ENCODE measurements at regions of chr11 and their contacts with region 1.

Region 1: GRCh38 chr11:116853461-116854073 is 16.1 kb upstream of the APOA1 start:
- DNase-seq: peak; percentile 13 to 90 (median 61)
- ATAC-seq: peak; percentile 95
- H3K4me3 ChIP-seq: peak overlapping the region; percentile 4 to 7
- H3K4me3 Mint-ChIP-seq: peak overlapping the region; percentile 47
- H3K27ac ChIP-seq: peak overlapping the region; percentile 47 to 72
- H3K27ac Mint-ChIP-seq: peak overlapping the region; percentile 69
- H3K4me1 ChIP-seq: peaks cover 56% of the 10 kb centered on the region
- H3K4me1 Mint-ChIP-seq: peaks cover 73% of the 10 kb centered on the region
- H3K27me3 ChIP-seq: no peaks in the 10 kb centered on the region
- H3K27me3 Mint-ChIP-seq: no peaks in the 10 kb centered on the region
- CTCF ChIP-seq: no peak

Region 2: GRCh38 chr11:116415095-116415494 is 438.5 kb before region 1 on chr11:
- CTCF ChIA-PET with region 1: no interaction called
- POLR2A ChIA-PET with region 1: no interaction called
- intact Hi-C with region 1: no loop called
- DNase-seq: no peak
- ATAC-seq: no peak
- H3K4me3 ChIP-seq: no peak overlapping the region
- H3K4me3 Mint-ChIP-seq: no peak overlapping the region
- H3K27ac ChIP-seq: no peak overlapping the region
- H3K27ac Mint-ChIP-seq: no peak overlapping the region
- H3K4me1 ChIP-seq: no peaks in the 10 kb centered on the region
- H3K4me1 Mint-ChIP-seq: no peaks in the 10 kb centered on the region
- H3K27me3 ChIP-seq: no peaks in the 10 kb centered on the region
- H3K27me3 Mint-ChIP-seq: peaks cover 9% of the 10 kb centered on the region
- CTCF ChIP-seq: no peak

Region 3: GRCh38 chr11:116787786-116788486 is 65.6 kb before region 1 on chr11 and contains the start of gene ZPR1:
- CTCF ChIA-PET with region 1: interaction called, 33 read pairs
- POLR2A ChIA-PET with region 1: interaction called, 7 read pairs
- intact Hi-C with region 1: loop called (anchors 1 to 5 kb)
- DNase-seq: peak; percentile 69 to 91 (median 87)
- ATAC-seq: peak; percentile 80
- H3K4me3 ChIP-seq: peak within 1 kb of the TSS; percentile 60 to 94
- H3K4me3 Mint-ChIP-seq: peak within 1 kb of the TSS; percentile 95
- H3K27ac ChIP-seq: peak within 1 kb of the TSS; percentile 80 to 95
- H3K27ac Mint-ChIP-seq: peak within 1 kb of the TSS; percentile 91
- H3K4me1 ChIP-seq: peaks cover 29% of the 10 kb centered on the region
- H3K4me1 Mint-ChIP-seq: peaks cover 54% of the 10 kb centered on the region
- H3K27me3 ChIP-seq: no peaks in the 10 kb centered on the region
- H3K27me3 Mint-ChIP-seq: no peaks in the 10 kb centered on the region
- CTCF ChIP-seq: no peak
- total RNA-seq, gene ZPR1: 132 to 134 TPM

Region 4: DNA sequence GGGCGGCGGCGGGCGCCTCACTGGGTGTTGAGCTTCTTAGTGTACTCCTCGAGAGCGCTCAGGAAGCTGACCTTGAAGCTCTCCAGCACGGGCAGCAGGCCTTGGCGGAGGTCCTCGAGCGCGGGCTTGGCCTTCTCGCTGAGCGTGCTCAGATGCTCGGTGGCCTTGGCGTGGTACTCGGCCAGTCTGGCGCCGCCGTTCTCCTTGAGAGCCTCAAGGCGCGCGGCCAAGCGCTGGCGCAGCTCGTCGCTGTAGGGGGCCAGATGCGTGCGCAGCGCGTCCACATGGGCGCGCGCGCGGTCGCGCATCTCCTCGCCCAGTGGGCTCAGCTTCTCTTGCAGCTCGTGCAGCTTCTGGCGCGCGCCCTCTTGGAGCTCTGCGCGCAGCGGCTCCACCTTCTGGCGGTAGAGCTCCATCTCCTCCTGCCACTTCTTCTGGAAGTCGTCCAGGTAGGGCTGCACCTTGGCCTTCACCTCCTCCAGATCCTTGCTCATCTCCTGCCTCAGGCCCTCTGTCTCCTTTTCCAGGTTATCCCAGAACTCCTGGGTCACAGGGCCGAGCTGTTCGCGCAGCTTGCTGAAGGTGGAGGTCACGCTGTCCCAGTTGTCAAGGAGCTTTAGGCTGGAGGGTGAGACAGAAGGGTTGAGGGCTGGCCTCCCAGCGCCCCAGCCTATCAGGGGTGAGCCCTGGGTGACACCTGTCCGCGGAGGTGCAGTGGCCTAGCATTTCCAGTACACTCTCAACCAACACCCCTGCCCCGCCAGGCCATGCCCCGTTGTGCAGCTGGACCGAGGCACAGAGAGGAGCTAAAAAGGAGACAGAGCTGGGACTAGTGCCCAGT is 17.6 kb before region 1 on chr11:
- CTCF ChIA-PET with region 1: interaction called, 52 read pairs
- POLR2A ChIA-PET with region 1: interaction called, 18 read pairs
- intact Hi-C with region 1: loop called in 1 of 2 experiments (anchors 1 kb)
- DNase-seq: peak; percentile 65 to 92 (median 82)
- ATAC-seq: peak; percentile 97
- H3K4me3 ChIP-seq: peak overlapping the region; percentile 63 to 64
- H3K4me3 Mint-ChIP-seq: peak overlapping the region; percentile 84
- H3K27ac ChIP-seq: peak overlapping the region; percentile 57 to 63
- H3K27ac Mint-ChIP-seq: peak overlapping the region; percentile 70
- H3K4me1 ChIP-seq: peaks cover 16% of the 10 kb centered on the region
- H3K4me1 Mint-ChIP-seq: peaks cover 14% of the 10 kb centered on the region
- H3K27me3 ChIP-seq: no peaks in the 10 kb centered on the region
- H3K27me3 Mint-ChIP-seq: no peaks in the 10 kb centered on the region
- CTCF ChIP-seq: peak; percentile 54

Region 5: DNA sequence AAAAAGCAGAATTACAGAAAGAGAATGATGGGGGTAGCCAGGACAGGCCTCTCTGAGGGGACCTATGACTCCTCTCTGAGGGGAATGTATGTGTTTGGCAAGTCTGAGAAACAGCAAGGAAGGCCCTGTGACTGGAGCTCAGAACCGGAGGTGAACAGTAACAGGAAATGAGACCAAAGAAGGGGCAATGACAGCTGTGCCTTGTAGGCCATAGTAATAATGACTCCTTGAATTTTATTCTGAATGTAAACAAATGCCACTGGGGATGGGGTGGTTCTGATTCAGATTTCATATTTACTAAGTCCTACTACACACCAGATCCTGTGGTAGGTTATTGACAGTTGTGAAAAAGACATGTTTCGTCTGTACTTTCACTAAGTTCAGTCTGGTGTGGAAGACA is 36.6 kb after region 1 on chr11:
- CTCF ChIA-PET with region 1: no interaction called
- POLR2A ChIA-PET with region 1: no interaction called
- intact Hi-C with region 1: loop called in 1 of 2 experiments (anchors 5 kb)
- DNase-seq: peak in 2 of 9 experiments; percentile 29 to 41
- ATAC-seq: peak; percentile 70
- H3K4me3 ChIP-seq: no peak overlapping the region
- H3K4me3 Mint-ChIP-seq: no peak overlapping the region
- H3K27ac ChIP-seq: peak overlapping the region in 1 of 2 experiments; percentile 53
- H3K27ac Mint-ChIP-seq: peak overlapping the region; percentile 5
- H3K4me1 ChIP-seq: peaks cover 7% of the 10 kb centered on the region
- H3K4me1 Mint-ChIP-seq: peaks cover 21% of the 10 kb centered on the region
- H3K27me3 ChIP-seq: no peaks in the 10 kb centered on the region
- H3K27me3 Mint-ChIP-seq: no peaks in the 10 kb centered on the region
- CTCF ChIP-seq: no peak

Region 6: DNA sequence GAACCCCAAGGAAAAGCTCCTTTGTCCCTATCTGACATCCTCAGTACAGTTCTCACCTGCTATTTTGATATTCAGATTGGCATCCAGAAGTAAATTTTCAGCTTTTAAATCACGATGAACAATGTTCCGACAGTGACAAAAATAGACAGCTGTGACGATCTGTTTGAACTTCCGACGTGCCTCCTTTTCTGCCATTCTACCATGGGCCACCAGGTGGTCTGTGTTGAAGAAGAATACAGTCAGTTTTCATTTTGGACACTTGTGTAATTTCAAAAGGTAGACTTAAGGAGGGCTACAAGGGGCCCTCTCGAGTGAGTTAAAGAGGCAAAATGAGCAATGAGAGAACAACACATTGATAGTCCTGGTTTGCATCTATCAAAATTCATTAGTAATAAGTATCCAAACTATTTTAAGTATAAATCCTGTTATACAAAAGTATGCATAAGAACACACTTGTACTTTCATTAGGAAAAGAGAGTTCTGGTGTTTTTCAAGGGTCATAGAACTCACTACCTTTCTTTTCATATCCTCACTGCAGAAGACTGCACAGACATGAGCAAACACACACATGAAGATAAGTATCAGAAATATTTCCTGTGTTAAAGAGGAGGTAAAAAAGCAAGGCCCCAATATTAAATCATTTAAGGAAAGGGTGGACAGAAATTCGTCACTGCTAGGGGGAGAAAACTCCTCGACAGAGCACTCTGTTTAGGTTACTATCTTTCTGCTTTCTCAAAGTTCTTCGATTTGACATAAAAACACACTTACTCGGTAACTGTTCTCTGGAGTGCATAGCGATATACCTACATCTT is 73.8 kb after region 1 on chr11:
- CTCF ChIA-PET with region 1: interaction called, 3 read pairs
- POLR2A ChIA-PET with region 1: interaction called, 8 read pairs
- intact Hi-C with region 1: loop called in 1 of 2 experiments (anchors 5 kb)
- DNase-seq: peak; percentile 18 to 81 (median 56)
- ATAC-seq: peak; percentile 59
- H3K4me3 ChIP-seq: no peak overlapping the region
- H3K4me3 Mint-ChIP-seq: peak overlapping the region; percentile 65
- H3K27ac ChIP-seq: peak overlapping the region; percentile 37 to 96
- H3K27ac Mint-ChIP-seq: peak overlapping the region; percentile 86
- H3K4me1 ChIP-seq: peaks cover 75% of the 10 kb centered on the region
- H3K4me1 Mint-ChIP-seq: peaks cover 80% of the 10 kb centered on the region
- H3K27me3 ChIP-seq: no peaks in the 10 kb centered on the region
- H3K27me3 Mint-ChIP-seq: no peaks in the 10 kb centered on the region
- CTCF ChIP-seq: peak; percentile 71

Region 7: GRCh38 chr11:117327567-117328374 is 474.2 kb after region 1 on chr11 and contains the start of gene CEP164:
- CTCF ChIA-PET with region 1: no interaction called
- POLR2A ChIA-PET with region 1: no interaction called
- intact Hi-C with region 1: loop called in 1 of 2 experiments (anchors 10 kb)
- DNase-seq: peak; percentile 90 to 97 (median 95)
- ATAC-seq: peak; percentile 90
- H3K4me3 ChIP-seq: peak within 1 kb of the TSS; percentile 64 to 91
- H3K4me3 Mint-ChIP-seq: no peak within 1 kb of the TSS
- H3K27ac ChIP-seq: peak within 1 kb of the TSS; percentile 92 to 94
- H3K27ac Mint-ChIP-seq: no peak within 1 kb of the TSS
- H3K4me1 ChIP-seq: peaks cover 9% of the 10 kb centered on the region
- H3K4me1 Mint-ChIP-seq: peaks cover 9% of the 10 kb centered on the region
- H3K27me3 ChIP-seq: no peaks in the 10 kb centered on the region
- H3K27me3 Mint-ChIP-seq: no peaks in the 10 kb centered on the region
- CTCF ChIP-seq: no peak
- total RNA-seq, gene CEP164: 23.9 to 28.4 TPM